Panc1 (cell line): ENCODE measurements at regions of chr10 and their contacts with region 1.

Region 1: GRCh38 chr10:63206997-63207811 is 74.1 kb downstream of the NRBF2 start:
- DNase-seq: no peak
- ATAC-seq: no peak
- H3K4me3 ChIP-seq: no peak overlapping the region
- H3K27ac ChIP-seq: no peak overlapping the region
- H3K4me1 ChIP-seq: peaks cover 6% of the 10 kb centered on the region; the same call in 1 of the 2 replicates
- H3K27me3 ChIP-seq: no peaks in the 10 kb centered on the region
- CTCF ChIP-seq: no peak

Region 2: DNA sequence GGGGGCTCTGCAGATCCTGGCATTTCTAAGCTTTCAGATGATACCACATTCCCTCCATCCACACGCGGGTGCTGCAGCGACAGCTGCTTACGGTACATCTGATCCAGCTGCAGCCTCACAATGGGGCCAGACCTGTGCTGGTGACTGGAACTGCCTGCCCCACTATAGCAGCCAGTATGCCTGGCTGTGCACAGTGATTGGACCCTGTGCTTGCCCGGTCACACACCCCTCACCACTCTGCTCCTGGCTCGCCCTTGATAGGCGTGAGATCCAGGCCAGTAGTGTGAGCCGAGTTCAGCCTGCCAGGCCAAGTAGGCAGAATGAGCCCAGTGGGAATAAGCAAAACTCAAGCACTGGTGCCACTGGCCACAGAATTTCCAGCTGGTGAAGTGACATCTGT is 90.7 kb after region 1 on chr10:
- CTCF ChIA-PET with region 1: no interaction called
- POLR2A ChIA-PET with region 1: no interaction called
- in situ Hi-C with region 1: no loop called
- intact Hi-C with region 1: no loop called
- DNase-seq: no peak
- ATAC-seq: peak; percentile 23; the same call in 1 of the 2 replicates
- H3K4me3 ChIP-seq: no peak overlapping the region
- H3K27ac ChIP-seq: no peak overlapping the region
- H3K4me1 ChIP-seq: peaks cover 11% of the 10 kb centered on the region
- H3K27me3 ChIP-seq: no peaks in the 10 kb centered on the region
- CTCF ChIP-seq: no peak

Region 3: DNA sequence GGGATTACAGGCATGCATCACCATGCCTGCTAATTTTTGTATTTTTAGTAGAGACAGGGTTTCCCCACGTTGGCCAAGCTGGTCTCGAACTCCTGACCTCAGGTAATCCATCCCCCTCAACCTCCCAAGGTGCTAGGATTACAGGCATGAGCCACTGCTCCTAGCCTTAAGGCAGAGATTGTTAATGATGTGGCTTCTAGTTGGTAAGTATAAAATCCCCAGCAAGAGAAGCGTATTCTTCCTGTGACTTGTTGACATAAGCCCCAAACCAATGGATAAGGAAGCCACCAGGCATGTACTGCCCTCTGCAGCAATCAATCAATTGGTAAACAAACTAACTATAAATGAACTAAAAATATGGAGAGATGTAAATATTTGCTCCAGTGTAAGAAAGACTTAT is 355.2 kb after region 1 on chr10:
- CTCF ChIA-PET with region 1: interaction called, 10 read pairs
- POLR2A ChIA-PET with region 1: no interaction called
- in situ Hi-C with region 1: no loop called
- intact Hi-C with region 1: no loop called
- DNase-seq: no peak
- ATAC-seq: no peak
- H3K4me3 ChIP-seq: no peak overlapping the region
- H3K27ac ChIP-seq: no peak overlapping the region
- H3K4me1 ChIP-seq: peaks cover 26% of the 10 kb centered on the region
- H3K27me3 ChIP-seq: no peaks in the 10 kb centered on the region
- CTCF ChIP-seq: no peak